ENCODE measurements at regions of chr12 and their contacts with region 1.

Region 1: GRCh38 chr12:123388177-123388947 is 4.4 kb downstream of the KMT5A start:
- DNase-seq: peak; percentile 95
- H3K4me3 Mint-ChIP-seq: peak overlapping the region; percentile 85
- H3K27ac Mint-ChIP-seq: peak overlapping the region; percentile 89
- H3K4me1 Mint-ChIP-seq: peaks cover 35% of the 10 kb centered on the region
- H3K27me3 Mint-ChIP-seq: no peaks in the 10 kb centered on the region

Region 2: DNA sequence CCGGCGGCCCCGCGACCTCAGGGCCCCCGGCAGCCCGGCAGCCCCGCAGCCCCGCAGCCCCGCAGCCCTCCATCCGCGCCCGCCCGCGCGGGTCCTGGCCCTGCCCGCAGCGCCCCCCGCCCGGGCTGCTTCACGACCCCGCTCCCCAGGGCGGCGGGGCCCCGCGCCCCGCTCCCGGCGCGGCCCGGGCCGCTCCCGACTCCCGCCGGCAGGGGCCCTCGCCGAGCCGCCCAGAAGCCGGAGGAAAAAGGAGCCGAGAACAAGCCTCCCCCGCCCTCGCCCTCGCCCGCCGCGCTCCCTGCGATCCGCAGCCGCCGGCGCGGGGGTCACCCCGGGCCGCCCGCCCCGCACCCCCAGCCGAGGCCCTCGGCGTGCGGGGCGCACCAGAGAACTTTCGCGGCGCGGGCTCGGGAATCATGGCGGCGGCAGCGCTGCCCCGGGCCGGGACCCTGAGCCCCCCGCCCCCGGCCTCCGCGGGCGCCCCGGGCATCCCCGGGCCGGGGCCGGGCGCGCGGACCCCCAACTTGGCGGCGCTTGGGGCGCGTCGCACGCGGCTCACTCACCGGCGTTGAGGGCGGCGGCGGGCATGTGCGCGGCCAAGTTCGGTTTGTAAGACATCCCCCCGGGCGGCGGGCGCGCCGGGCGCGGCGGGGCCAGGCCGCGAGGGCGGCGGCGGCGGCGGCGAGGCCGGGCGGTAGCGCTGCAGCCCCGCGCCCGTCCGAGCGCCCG is 117.2 kb before region 1 on chr12:
- intact Hi-C with region 1: loop called (anchors 1 kb)
- DNase-seq: peak; percentile 93
- H3K4me3 Mint-ChIP-seq: peak overlapping the region; percentile 92
- H3K27ac Mint-ChIP-seq: no peak overlapping the region
- H3K4me1 Mint-ChIP-seq: peaks cover 16% of the 10 kb centered on the region
- H3K27me3 Mint-ChIP-seq: no peaks in the 10 kb centered on the region

Region 3: DNA sequence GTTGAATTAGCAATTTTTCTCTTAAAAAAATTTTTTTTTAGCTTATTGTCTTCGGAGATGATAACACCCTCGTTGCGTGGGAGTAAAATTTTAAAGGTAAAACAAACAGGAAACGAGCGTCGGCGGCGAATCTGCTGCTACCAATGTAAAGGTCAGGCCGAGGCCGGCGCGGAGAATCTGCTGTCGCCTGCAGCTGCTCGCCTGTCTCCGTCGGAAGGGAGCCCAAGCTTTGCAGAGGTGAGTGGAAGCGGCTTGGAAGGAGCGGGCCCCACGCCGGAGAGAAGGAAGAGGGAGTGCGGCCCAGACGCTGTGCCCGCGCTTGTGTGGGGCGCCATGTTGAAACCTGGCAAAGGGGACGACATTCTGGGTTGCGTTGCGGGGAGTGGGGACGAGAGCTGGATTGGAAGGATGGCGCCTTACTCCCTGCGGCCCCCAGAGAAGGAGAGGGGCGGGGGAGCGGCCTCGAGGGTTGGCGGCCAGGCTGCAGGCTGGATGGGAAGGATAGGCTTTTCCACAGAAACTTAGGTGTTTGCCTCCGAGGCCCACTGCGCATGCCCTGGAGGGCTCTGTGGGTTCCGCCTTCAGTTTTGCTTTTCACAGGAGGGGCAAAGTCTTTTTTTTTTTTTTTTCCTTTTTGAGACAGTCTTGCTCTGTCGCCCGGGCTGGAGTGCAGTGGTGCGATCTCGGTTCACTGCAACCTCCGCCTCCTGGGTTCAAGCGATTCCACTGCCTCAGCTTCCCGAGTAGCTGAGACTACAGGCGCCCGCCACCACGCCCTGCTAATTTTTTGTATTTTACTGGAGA is 69.8 kb after region 1 on chr12 and contains the start of gene SNRNP35:
- intact Hi-C with region 1: loop called (anchors 5 kb)
- DNase-seq: peak; percentile 95
- H3K4me3 Mint-ChIP-seq: peak within 1 kb of the TSS; percentile 100
- H3K27ac Mint-ChIP-seq: peak within 1 kb of the TSS; percentile 100
- H3K4me1 Mint-ChIP-seq: peaks cover 22% of the 10 kb centered on the region
- H3K27me3 Mint-ChIP-seq: no peaks in the 10 kb centered on the region
- total RNA-seq, gene SNRNP35: 30.6 and 33.4 TPM in 2 replicates